ENCODE measurements at regions of chr14 and their contacts with region 1.

Region 1: GRCh38 chr14:73173092-73173735 is 36.9 kb downstream of the PSEN1 start:
- DNase-seq: no peak
- H3K4me3 ChIP-seq: no peak overlapping the region
- H3K27ac ChIP-seq: no peak overlapping the region
- H3K4me1 ChIP-seq: no peaks in the 10 kb centered on the region
- H3K27me3 ChIP-seq: no peaks in the 10 kb centered on the region
- CTCF ChIP-seq: peak; percentile 36 to 50 (median 41)
- EP300 ChIP-seq: no peak
- POLR2A ChIP-seq: no peak

Region 2: GRCh38 chr14:73269729-73270531 is 96.7 kb after region 1 on chr14:
- intact Hi-C with region 1: loop called (anchors 10 kb)
- DNase-seq: no peak
- H3K4me3 ChIP-seq: peak overlapping the region; percentile 39 to 57 (median 49)
- H3K27ac ChIP-seq: peak overlapping the region; percentile 33 to 60 (median 44)
- H3K4me1 ChIP-seq: peaks cover 10 to 26% (median 18%) of the 10 kb centered on the region in 4 donors
- H3K27me3 ChIP-seq: no peaks in the 10 kb centered on the region
- CTCF ChIP-seq: no peak
- EP300 ChIP-seq: no peak
- POLR2A ChIP-seq: no peak

Region 3: GRCh38 chr14:73472185-73473114 is 299.2 kb after region 1 on chr14:
- intact Hi-C with region 1: loop called (anchors 10 kb)
- DNase-seq: no peak
- H3K4me3 ChIP-seq: no peak overlapping the region
- H3K27ac ChIP-seq: no peak overlapping the region
- H3K4me1 ChIP-seq: peaks cover 0 to 16% (median 11%) of the 10 kb centered on the region in 4 donors
- H3K27me3 ChIP-seq: no peaks in the 10 kb centered on the region
- CTCF ChIP-seq: peak; percentile 67 to 75 (median 72)
- EP300 ChIP-seq: no peak
- POLR2A ChIP-seq: no peak

Measured in esophagus muscularis mucosa (tissue), 4 donors.